GM18951 (cell line): ENCODE measurements at regions of chr13 and their contacts with region 1.

Region 1: DNA sequence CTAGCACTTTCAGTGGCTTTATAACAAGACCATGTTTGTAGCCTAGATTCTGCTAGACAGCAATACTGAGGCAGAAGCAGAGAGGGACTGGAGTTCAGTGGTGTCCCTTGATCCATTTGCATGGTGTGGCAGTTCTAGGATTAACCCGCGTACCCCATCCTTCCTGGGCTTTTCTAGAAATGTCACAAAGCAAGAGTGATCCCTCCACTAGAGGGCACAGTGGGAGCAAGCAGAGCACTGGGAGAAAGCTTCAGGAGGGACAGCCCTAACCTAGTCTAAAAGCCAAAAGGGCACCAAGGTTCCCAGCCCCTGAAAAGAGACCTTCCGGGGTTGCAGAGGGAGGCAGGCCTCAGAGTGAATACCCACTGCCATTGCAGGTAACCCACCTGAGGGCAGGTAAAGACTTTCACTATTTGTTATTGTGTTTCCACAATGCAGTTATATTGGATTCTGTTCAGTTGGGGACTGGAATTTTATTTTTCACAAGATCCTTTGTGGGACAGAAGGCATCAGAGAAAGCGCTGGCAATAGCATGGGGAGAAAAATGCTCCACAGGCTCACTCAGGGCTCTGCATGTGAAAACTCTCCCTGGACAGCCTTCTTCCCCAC is 170.6 kb downstream of the FLT1 start:
- POLR2A ChIP-seq: no peak

Region 2: DNA sequence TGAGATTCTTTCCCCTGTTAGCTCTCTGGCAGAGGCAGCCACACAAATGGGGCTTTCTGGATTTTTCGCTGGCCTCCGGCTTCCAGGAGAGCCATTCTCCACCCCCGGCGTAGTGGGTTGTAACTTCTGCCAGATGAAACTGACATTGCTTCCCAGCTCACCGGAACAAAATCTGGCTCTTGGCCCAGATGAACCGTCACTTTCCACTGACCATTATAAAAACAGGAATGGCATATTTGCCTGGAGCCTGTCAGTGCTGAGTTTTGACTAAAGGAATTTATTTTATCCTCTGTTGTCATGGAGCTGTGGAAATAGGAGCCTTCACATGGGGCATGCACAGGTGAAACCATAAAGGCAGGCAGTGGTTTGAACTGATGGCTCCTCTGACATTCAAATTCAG is 1443.1 kb before region 1 on chr13:
- in situ Hi-C with region 1: no loop called
- POLR2A ChIP-seq: no peak

Region 3: GRCh38 chr13:28792992-28793391 is 468.7 kb after region 1 on chr13:
- in situ Hi-C with region 1: loop called (anchors 10 kb)
- POLR2A ChIP-seq: no peak